ENCODE measurements at regions of chr20 and their contacts with region 1.

Region 1: GRCh38 chr20:37789408-37789807 is 95.6 kb downstream of the CTNNBL1 start:
- DNase-seq: peak; percentile 42
- ATAC-seq: peak; percentile 64
- H3K4me3 ChIP-seq: peak overlapping the region in 1 of 5 experiments; percentile 31
- H3K4me3 Mint-ChIP-seq: peak overlapping the region; percentile 58
- H3K27ac ChIP-seq: peak overlapping the region; percentile 14 to 58
- H3K27ac Mint-ChIP-seq: peak overlapping the region; percentile 80
- H3K4me1 ChIP-seq: peaks cover 22 to 23% of the 10 kb centered on the region in 2 donors
- H3K4me1 Mint-ChIP-seq: peaks cover 33% of the 10 kb centered on the region
- H3K27me3 ChIP-seq: no peaks in the 10 kb centered on the region
- H3K27me3 Mint-ChIP-seq: no peaks in the 10 kb centered on the region
- CTCF ChIP-seq: no peak

Region 2: GRCh38 chr20:37777012-37777950 is 12.1 kb before region 1 on chr20:
- CTCF ChIA-PET with region 1: no interaction called
- POLR2A ChIA-PET with region 1: no interaction called
- intact Hi-C with region 1: loop called (anchors 1 kb)
- DNase-seq: peak; percentile 33
- ATAC-seq: no peak
- H3K4me3 ChIP-seq: peak overlapping the region in 1 of 5 experiments; percentile 28
- H3K4me3 Mint-ChIP-seq: peak overlapping the region; percentile 68
- H3K27ac ChIP-seq: peak overlapping the region in 1 of 2 donors; percentile 53
- H3K27ac Mint-ChIP-seq: peak overlapping the region; percentile 56
- H3K4me1 ChIP-seq: peaks cover 41 to 44% of the 10 kb centered on the region in 2 donors
- H3K4me1 Mint-ChIP-seq: peaks cover 49% of the 10 kb centered on the region
- H3K27me3 ChIP-seq: no peaks in the 10 kb centered on the region
- H3K27me3 Mint-ChIP-seq: no peaks in the 10 kb centered on the region
- CTCF ChIP-seq: no peak